Esophagus squamous epithelium (tissue), 5 donors: ENCODE measurements at regions of chr4 and their contacts with region 1.

Region 1: GRCh38 chr4:109406338-109406931 is 27.2 kb upstream of the SEC24B start:
- DNase-seq: no peak
- H3K4me3 ChIP-seq: no peak overlapping the region
- H3K27ac ChIP-seq: no peak overlapping the region
- H3K4me1 ChIP-seq: no peaks in the 10 kb centered on the region
- H3K27me3 ChIP-seq: no peaks in the 10 kb centered on the region
- CTCF ChIP-seq: peak in 5 of 6 experiments; percentile 22 to 73 (median 54)
- POLR2A ChIP-seq: no peak

Region 2: GRCh38 chr4:108834835-108835384 is 571.5 kb before region 1 on chr4:
- intact Hi-C with region 1: loop called (anchors 10 kb)
- DNase-seq: no peak
- H3K4me3 ChIP-seq: no peak overlapping the region
- H3K27ac ChIP-seq: no peak overlapping the region
- H3K4me1 ChIP-seq: peaks cover 0 to 13% (median 0%) of the 10 kb centered on the region in 3 donors
- H3K27me3 ChIP-seq: no peaks in the 10 kb centered on the region
- CTCF ChIP-seq: peak in 5 of 6 experiments; percentile 34 to 64 (median 45)
- POLR2A ChIP-seq: no peak

Region 3: GRCh38 chr4:109506890-109507289 is 100.5 kb after region 1 on chr4:
- intact Hi-C with region 1: no loop called
- DNase-seq: no peak
- H3K4me3 ChIP-seq: no peak overlapping the region
- H3K27ac ChIP-seq: no peak overlapping the region
- H3K4me1 ChIP-seq: no peaks in the 10 kb centered on the region
- H3K27me3 ChIP-seq: no peaks in the 10 kb centered on the region
- CTCF ChIP-seq: no peak
- POLR2A ChIP-seq: no peak

Region 4: GRCh38 chr4:110071466-110071865 is 665.0 kb after region 1 on chr4:
- intact Hi-C with region 1: no loop called
- DNase-seq: no peak
- H3K4me3 ChIP-seq: no peak overlapping the region
- H3K27ac ChIP-seq: no peak overlapping the region
- H3K4me1 ChIP-seq: no peaks in the 10 kb centered on the region
- H3K27me3 ChIP-seq: no peaks in the 10 kb centered on the region
- CTCF ChIP-seq: no peak
- POLR2A ChIP-seq: no peak